CD8-positive, alpha-beta memory T cell (primary cell): ENCODE measurements at regions of chr1 and their contacts with region 1.

Region 1: DNA sequence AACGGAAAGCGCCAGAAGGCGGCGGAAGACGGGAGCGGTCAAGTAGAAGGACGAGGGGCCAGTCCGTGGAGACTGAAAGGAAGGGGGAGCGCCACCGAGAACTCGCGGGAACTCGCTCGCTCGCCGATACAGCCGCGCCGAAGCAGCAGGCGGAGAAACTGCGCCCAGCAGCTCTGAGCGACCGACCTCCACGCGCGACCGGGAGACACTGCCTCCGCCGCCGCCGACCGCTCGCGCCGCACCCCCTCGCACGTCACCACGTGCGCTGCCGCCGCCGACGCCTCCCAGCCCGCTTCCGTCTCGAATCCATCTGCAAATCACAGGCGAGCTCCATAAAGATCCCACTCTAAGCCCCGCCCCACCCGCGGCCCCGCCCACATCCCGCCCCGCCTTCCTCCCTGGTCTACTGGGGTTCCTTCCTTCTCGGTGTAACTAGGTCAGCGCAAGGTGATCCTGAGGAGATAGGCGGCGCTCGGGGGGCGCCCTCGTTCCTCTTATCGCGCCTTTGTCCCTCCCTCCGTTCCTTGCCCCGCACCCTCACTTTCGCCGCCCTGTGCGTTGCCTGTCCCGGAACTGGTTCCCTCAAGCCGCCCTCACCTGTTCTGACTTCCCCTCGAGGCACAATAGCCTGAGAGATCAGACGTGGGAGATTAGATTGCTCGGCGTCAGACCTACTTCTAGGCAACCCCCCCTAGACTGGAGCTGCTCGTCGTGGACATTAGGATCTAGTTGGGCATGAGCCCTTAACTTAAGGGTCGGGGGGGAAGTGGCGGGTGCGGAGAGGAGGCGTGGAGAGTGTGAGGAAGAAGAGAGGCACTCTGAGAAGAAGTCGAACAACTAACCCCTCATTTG is at the start of gene IVNS1ABP:
- DNase-seq: peak; percentile 91 to 97 (median 95)
- H3K4me3 ChIP-seq: peak within 1 kb of the TSS; percentile 91
- H3K4me3 Mint-ChIP-seq: peak within 1 kb of the TSS; percentile 93 to 99 (median 98)
- H3K27ac ChIP-seq: peak within 1 kb of the TSS; percentile 98
- H3K27ac Mint-ChIP-seq: peak within 1 kb of the TSS; percentile 95 to 100 (median 99)
- H3K4me1 ChIP-seq: peaks cover 46% of the 10 kb centered on the region
- H3K4me1 Mint-ChIP-seq: peaks cover 47 to 58% (median 55%) of the 10 kb centered on the region in 3 donors
- H3K27me3 ChIP-seq: no peaks in the 10 kb centered on the region
- H3K27me3 Mint-ChIP-seq: peaks cover 0 to 10% of the 10 kb centered on the region in 2 donors
- total RNA-seq, gene IVNS1ABP: 205 to 208 TPM

Region 2: GRCh38 chr1:185108321-185108720 is 208.9 kb before region 1 on chr1:
- CTCF ChIA-PET with region 1: no interaction called
- POLR2A ChIA-PET with region 1: no interaction called
- DNase-seq: no peak
- H3K4me3 ChIP-seq: no peak overlapping the region
- H3K4me3 Mint-ChIP-seq: no peak overlapping the region
- H3K27ac ChIP-seq: no peak overlapping the region
- H3K27ac Mint-ChIP-seq: no peak overlapping the region
- H3K4me1 ChIP-seq: no peaks in the 10 kb centered on the region
- H3K4me1 Mint-ChIP-seq: no peaks in the 10 kb centered on the region
- H3K27me3 ChIP-seq: no peaks in the 10 kb centered on the region
- H3K27me3 Mint-ChIP-seq: peaks cover 0 to 1% of the 10 kb centered on the region in 2 donors

Region 3: DNA sequence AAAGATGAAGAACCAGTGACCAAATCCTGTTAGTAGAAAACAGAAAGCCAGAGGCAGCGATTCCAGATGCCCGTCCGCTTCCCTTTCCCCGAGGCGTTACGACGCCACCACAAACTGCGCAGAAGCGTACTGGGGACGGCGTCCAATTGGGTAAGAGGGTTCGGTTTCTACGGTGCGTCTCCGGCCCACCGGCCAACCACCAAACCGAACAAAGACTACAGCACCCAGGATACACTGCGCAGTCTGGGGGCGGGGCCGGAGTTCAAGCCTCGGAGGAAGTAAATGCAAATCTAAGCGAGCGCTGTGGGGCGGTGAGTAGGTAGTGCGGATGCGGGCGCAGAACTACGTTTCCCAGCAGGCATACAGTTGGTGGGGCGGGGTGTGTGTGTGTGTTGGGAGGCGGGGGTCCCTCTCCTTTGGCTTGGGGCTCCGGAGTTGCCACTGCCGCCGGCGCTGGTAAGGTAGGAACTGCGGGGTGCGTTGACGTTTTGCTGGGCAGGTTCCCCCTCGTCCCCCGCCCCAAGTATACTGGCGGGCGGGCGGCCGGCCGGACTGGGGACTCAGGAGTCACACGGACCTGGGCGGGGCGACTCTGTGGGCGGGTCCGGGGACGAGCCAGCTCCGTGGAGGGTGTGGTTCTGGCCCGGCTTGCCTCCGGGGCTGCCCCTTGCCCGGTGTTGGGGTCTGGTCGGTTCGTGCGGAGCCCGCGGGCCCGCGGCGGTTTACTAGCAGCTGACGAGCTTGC is 160.2 kb before region 1 on chr1 and contains the starts of genes SWT1 and TRMT1L:
- CTCF ChIA-PET with region 1: interaction called, 4 read pairs
- POLR2A ChIA-PET with region 1: interaction called, 23 read pairs
- DNase-seq: peak; percentile 96 to 98 (median 97)
- H3K4me3 ChIP-seq: peak within 1 kb of the TSS; percentile 90
- H3K4me3 Mint-ChIP-seq: peak within 1 kb of the TSS; percentile 96 to 99 (median 99)
- H3K27ac ChIP-seq: peak within 1 kb of the TSS; percentile 98
- H3K27ac Mint-ChIP-seq: peak within 1 kb of the TSS; percentile 93 to 100 (median 99)
- H3K4me1 ChIP-seq: peaks cover 14% of the 10 kb centered on the region
- H3K4me1 Mint-ChIP-seq: peaks cover 41 to 48% (median 46%) of the 10 kb centered on the region in 3 donors
- H3K27me3 ChIP-seq: no peaks in the 10 kb centered on the region
- H3K27me3 Mint-ChIP-seq: no peaks in the 10 kb centered on the region
- total RNA-seq, gene SWT1: 2.3 to 2.7 TPM
- total RNA-seq, gene TRMT1L: 23.2 to 25.5 TPM

Region 4: GRCh38 chr1:185267701-185268100 is 49.6 kb before region 1 on chr1:
- CTCF ChIA-PET with region 1: no interaction called
- POLR2A ChIA-PET with region 1: no interaction called
- DNase-seq: no peak
- H3K4me3 ChIP-seq: no peak overlapping the region
- H3K4me3 Mint-ChIP-seq: no peak overlapping the region
- H3K27ac ChIP-seq: no peak overlapping the region
- H3K27ac Mint-ChIP-seq: no peak overlapping the region
- H3K4me1 ChIP-seq: no peaks in the 10 kb centered on the region
- H3K4me1 Mint-ChIP-seq: no peaks in the 10 kb centered on the region
- H3K27me3 ChIP-seq: no peaks in the 10 kb centered on the region
- H3K27me3 Mint-ChIP-seq: no peaks in the 10 kb centered on the region

Region 5: DNA sequence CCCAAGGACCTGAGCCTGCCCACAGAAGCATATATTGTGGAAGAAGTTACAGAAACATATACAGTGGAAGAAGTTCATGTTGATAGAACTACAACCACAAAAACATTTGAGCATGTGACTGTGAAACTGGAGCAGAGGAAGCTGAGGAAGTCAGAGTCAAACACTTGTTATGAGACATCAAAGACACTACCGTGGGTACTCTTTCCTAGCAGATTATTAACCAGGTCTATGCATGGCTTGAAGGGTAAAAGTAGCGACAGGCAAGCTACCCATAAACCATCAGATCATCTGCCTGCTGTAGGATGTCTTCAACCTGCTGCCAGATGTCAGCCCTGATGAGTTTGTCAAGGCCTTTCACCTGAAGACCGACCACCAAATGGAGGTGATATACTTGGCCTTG is 36.0 kb before region 1 on chr1:
- CTCF ChIA-PET with region 1: interaction called, 6 read pairs
- POLR2A ChIA-PET with region 1: interaction called, 24 read pairs
- DNase-seq: peak in 3 of 5 donors; percentile 3 to 60 (median 59)
- H3K4me3 ChIP-seq: peak overlapping the region; percentile 29
- H3K4me3 Mint-ChIP-seq: peak overlapping the region in 6 of 7 donors; percentile 64 to 79 (median 71)
- H3K27ac ChIP-seq: no peak overlapping the region
- H3K27ac Mint-ChIP-seq: peak overlapping the region; percentile 86 to 100 (median 96)
- H3K4me1 ChIP-seq: peaks cover 56% of the 10 kb centered on the region
- H3K4me1 Mint-ChIP-seq: peaks cover 48 to 66% (median 66%) of the 10 kb centered on the region in 3 donors
- H3K27me3 ChIP-seq: no peaks in the 10 kb centered on the region
- H3K27me3 Mint-ChIP-seq: peaks cover 0 to 2% of the 10 kb centered on the region in 2 donors

Region 6: DNA sequence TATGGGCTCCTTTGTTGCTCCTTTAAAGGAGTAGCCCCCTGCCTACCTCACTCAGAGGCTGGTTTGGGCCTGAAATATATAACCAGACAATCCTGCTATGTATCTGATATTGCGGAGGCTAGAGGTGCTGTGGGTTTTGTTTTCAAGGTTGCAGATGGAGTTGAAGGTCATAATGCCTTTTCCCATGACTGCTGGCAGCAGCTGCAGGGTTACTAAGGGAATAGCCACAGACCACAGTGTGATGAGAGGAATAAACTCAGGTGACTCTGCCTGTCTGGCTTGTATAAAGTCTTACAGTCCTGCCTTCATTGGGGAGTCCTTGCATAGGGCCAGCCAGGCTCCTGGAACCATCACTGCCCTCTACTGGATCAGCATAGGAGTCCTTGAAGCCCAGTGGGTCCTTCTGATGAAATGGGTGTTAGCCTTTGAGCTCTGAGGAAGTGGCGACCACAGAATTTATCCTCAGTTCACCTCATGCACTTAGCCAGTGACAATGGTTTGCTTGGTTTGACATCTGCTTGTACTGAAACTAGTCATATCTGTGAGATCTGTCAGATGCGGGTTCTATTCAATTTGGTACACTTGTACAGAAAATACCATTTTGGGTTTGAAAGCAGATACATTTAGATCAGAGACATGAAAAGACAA is 242.5 kb after region 1 on chr1:
- CTCF ChIA-PET with region 1: interaction called, 27 read pairs
- POLR2A ChIA-PET with region 1: interaction called, 9 read pairs
- DNase-seq: peak in 4 of 5 donors; percentile 7 to 70 (median 54)
- H3K4me3 ChIP-seq: no peak overlapping the region
- H3K4me3 Mint-ChIP-seq: peak overlapping the region in 6 of 7 donors; percentile 12 to 73 (median 34)
- H3K27ac ChIP-seq: no peak overlapping the region
- H3K27ac Mint-ChIP-seq: peak overlapping the region; percentile 30 to 92 (median 80)
- H3K4me1 ChIP-seq: peaks cover 36% of the 10 kb centered on the region
- H3K4me1 Mint-ChIP-seq: peaks cover 46 to 52% (median 52%) of the 10 kb centered on the region in 3 donors
- H3K27me3 ChIP-seq: no peaks in the 10 kb centered on the region
- H3K27me3 Mint-ChIP-seq: peaks cover 0 to 3% of the 10 kb centered on the region in 2 donors

Region 7: DNA sequence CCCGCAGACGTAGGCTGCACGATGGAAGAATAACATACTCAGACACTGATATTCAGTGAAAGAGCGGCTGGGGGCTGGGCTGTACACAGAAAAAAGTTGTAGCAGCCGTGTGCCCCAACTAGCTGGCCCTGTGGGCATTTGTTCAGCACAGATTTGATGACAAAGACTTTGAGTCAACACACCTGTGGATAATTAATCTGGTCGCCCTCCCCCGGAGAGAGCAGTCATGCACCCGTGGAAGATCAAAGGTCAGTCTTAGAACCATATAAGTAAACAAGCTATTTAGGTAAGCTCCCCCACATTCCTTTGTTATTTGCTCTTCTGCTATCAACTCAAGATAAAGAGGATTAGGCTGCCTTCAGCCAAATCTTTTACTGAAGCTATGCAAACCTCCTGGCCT is 268.5 kb after region 1 on chr1:
- CTCF ChIA-PET with region 1: no interaction called
- POLR2A ChIA-PET with region 1: no interaction called
- DNase-seq: no peak
- H3K4me3 ChIP-seq: no peak overlapping the region
- H3K4me3 Mint-ChIP-seq: no peak overlapping the region
- H3K27ac ChIP-seq: no peak overlapping the region
- H3K27ac Mint-ChIP-seq: no peak overlapping the region
- H3K4me1 ChIP-seq: no peaks in the 10 kb centered on the region
- H3K4me1 Mint-ChIP-seq: no peaks in the 10 kb centered on the region
- H3K27me3 ChIP-seq: no peaks in the 10 kb centered on the region
- H3K27me3 Mint-ChIP-seq: peaks cover 3 to 7% of the 10 kb centered on the region in 2 donors

Region 8: DNA sequence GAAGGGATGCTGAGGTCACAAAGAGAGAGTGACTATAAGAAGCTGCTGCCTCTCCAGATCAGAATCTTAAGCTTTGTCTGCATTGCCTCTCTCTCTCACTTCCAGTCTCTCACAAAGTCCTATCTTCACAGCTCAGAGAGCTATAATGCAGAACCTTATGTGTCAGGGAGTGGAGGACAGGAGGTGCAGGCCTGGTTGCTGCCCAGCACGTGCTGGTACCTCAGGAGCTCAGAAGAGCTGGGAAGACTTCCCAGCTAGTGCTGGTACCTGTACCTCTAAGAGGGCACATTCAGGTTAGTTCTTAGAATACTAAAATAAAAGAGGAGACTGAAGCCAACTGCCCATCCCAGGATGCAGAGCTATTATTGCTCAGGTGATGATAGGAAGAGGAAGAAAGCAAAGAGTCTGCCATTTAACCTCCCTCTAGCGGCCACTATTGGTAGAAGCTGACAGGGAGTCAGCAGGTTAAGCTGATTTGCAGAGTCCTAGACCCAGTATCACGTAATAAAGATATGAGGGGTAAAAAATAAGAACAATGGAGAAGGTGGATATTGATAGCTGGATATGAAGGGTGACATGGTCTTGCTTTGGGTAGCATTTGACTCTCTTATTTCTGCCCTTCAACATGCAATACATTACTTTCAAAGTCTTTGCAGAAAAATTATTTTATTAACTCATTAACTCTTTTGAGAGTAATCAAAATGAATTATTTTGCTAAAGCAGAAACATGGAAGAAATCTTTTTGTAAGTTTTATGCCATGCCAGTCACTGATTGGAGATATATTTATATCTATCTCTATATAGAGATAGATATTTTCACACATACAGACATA is 278.8 kb after region 1 on chr1:
- CTCF ChIA-PET with region 1: interaction called, 36 read pairs
- POLR2A ChIA-PET with region 1: interaction called, 28 read pairs
- DNase-seq: peak; percentile 24 to 72 (median 47)
- H3K4me3 ChIP-seq: no peak overlapping the region
- H3K4me3 Mint-ChIP-seq: no peak overlapping the region
- H3K27ac ChIP-seq: no peak overlapping the region
- H3K27ac Mint-ChIP-seq: peak overlapping the region in 6 of 8 donors; percentile 36 to 70 (median 54)
- H3K4me1 ChIP-seq: peaks cover 13% of the 10 kb centered on the region
- H3K4me1 Mint-ChIP-seq: peaks cover 19 to 34% (median 32%) of the 10 kb centered on the region in 3 donors
- H3K27me3 ChIP-seq: no peaks in the 10 kb centered on the region
- H3K27me3 Mint-ChIP-seq: no peaks in the 10 kb centered on the region

Region 9: GRCh38 chr1:185681034-185681633 is 363.9 kb after region 1 on chr1:
- CTCF ChIA-PET with region 1: interaction called, 12 read pairs
- POLR2A ChIA-PET with region 1: interaction called, 15 read pairs
- DNase-seq: peak in 2 of 5 donors; percentile 17 to 33
- H3K4me3 ChIP-seq: no peak overlapping the region
- H3K4me3 Mint-ChIP-seq: no peak overlapping the region
- H3K27ac ChIP-seq: no peak overlapping the region
- H3K27ac Mint-ChIP-seq: no peak overlapping the region
- H3K4me1 ChIP-seq: peaks cover 15% of the 10 kb centered on the region
- H3K4me1 Mint-ChIP-seq: peaks cover 17 to 24% (median 22%) of the 10 kb centered on the region in 3 donors
- H3K27me3 ChIP-seq: no peaks in the 10 kb centered on the region
- H3K27me3 Mint-ChIP-seq: peaks cover 2 to 3% of the 10 kb centered on the region in 2 donors